MCF 10A (cell line): ENCODE measurements at regions of chr1 and their contacts with region 1.

Region 1: DNA sequence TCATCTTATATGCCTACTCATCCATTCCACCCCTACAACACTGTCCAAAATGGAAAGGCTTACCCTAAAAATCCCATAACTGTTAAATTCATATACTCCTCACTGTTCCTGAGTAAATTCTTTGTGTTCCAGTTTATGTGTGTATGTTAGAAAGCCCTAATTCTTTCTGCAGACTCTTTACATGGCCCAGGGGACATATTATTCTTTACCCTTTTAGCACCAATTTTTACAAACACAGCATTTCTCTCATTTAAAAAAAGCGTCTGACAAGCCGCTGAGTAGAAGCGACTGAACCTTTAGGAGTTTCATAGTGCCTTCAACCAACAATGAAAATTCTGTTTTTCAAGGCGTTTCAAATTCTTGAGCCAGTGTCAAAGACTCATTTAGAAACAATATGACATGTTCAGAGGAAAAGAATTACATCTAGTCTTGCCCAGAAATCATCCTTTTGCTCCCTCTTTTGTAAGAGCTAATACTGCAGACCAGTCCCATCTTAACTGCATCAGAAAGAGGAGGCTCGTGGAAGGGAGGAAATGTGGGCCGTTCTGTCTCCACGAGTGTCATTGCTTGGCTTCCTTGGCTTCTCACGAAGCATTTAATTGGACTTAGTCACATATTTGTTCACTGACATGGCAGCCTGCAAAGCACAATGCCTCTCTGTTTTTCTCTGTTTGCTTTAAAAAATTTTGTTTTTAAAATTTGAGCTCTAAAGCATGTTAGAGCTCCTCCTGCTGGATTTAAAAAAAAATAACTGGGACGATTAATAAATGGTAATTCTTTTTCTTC is 21.3 kb upstream of the C1orf105 start:
- DNase-seq: peak; percentile 67
- H3K4me3 Mint-ChIP-seq: peak overlapping the region; percentile 26
- H3K27ac Mint-ChIP-seq: peak overlapping the region; percentile 21
- H3K4me1 Mint-ChIP-seq: peaks cover 33% of the 10 kb centered on the region
- H3K27me3 Mint-ChIP-seq: no peaks in the 10 kb centered on the region
- CTCF ChIP-seq: peak; percentile 77

Region 2: DNA sequence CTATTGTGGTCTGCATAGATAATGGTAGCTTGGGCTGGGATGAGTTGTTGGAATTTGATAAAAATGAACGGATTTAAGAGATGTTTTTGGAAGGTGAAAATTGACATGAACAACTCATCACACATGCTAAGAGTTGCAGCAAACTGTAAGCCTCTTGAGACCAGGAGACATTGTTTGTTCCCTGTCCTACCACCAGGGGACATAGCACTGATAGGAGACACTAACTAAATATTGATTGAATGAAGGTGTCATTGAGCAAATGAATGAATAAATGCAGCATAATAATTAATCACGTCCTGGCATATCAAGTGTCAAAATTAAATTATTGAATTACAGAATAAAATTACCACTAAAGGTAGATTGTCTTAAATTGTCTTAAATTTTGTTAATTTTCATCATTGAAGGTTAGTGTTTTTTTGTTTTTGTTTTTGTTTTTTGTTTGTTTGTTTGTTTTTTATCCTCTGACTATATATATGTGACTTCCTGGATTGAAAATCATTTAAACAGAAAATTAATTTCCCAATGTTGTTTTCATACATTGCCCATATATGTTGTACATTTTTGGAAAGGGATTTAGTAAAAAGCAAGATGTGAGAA is 264.0 kb before region 1 on chr1:
- CTCF ChIA-PET with region 1: no interaction called
- POLR2A ChIA-PET with region 1: interaction called, 3 read pairs
- intact Hi-C with region 1: loop called (anchors 1 kb)
- DNase-seq: peak; percentile 62
- H3K4me3 Mint-ChIP-seq: no peak overlapping the region
- H3K27ac Mint-ChIP-seq: no peak overlapping the region
- H3K4me1 Mint-ChIP-seq: peaks cover 4% of the 10 kb centered on the region
- H3K27me3 Mint-ChIP-seq: no peaks in the 10 kb centered on the region
- CTCF ChIP-seq: peak; percentile 46

Region 3: DNA sequence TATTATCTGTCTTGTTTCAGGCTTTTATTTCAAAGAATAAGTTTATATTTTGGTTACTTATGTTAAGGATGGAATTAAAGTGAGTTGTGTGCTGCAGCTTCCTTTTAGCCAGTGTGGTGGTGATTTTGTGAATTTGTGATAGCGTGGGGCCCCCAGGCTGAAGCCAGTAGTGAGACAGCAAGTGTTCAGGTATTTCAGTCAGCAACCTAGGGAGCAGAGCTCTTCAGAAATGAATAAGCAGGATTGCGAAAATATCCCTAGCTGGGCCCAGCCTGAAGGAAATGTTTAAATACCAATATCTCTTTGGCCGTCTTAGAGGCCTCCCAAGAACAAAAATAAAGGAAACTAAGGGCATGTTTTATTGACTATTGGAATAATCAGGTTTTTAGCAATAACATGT is 129.5 kb before region 1 on chr1:
- CTCF ChIA-PET with region 1: interaction called, 16 read pairs
- POLR2A ChIA-PET with region 1: interaction called, 4 read pairs
- intact Hi-C with region 1: no loop called
- DNase-seq: peak; percentile 63
- H3K4me3 Mint-ChIP-seq: no peak overlapping the region
- H3K27ac Mint-ChIP-seq: no peak overlapping the region
- H3K4me1 Mint-ChIP-seq: peaks cover 29% of the 10 kb centered on the region
- H3K27me3 Mint-ChIP-seq: no peaks in the 10 kb centered on the region
- CTCF ChIP-seq: no peak

Region 4: GRCh38 chr1:172351761-172352161 is 47.4 kb before region 1 on chr1:
- CTCF ChIA-PET with region 1: interaction called, 10 read pairs
- POLR2A ChIA-PET with region 1: interaction called, 3 read pairs
- intact Hi-C with region 1: no loop called
- DNase-seq: peak; percentile 71
- H3K4me3 Mint-ChIP-seq: no peak overlapping the region
- H3K27ac Mint-ChIP-seq: peak overlapping the region; percentile 73
- H3K4me1 Mint-ChIP-seq: peaks cover 52% of the 10 kb centered on the region
- H3K27me3 Mint-ChIP-seq: no peaks in the 10 kb centered on the region
- CTCF ChIP-seq: no peak

Region 5: GRCh38 chr1:172429331-172430127 is 30.4 kb after region 1 on chr1:
- CTCF ChIA-PET with region 1: interaction called, 18 read pairs
- POLR2A ChIA-PET with region 1: no interaction called
- intact Hi-C with region 1: loop called (anchors 1 kb)
- DNase-seq: peak; percentile 83
- H3K4me3 Mint-ChIP-seq: no peak overlapping the region
- H3K27ac Mint-ChIP-seq: no peak overlapping the region
- H3K4me1 Mint-ChIP-seq: peaks cover 5% of the 10 kb centered on the region
- H3K27me3 Mint-ChIP-seq: no peaks in the 10 kb centered on the region
- CTCF ChIP-seq: peak; percentile 78